ENCODE measurements at regions of chr6 and their contacts with region 1.

Region 1: DNA sequence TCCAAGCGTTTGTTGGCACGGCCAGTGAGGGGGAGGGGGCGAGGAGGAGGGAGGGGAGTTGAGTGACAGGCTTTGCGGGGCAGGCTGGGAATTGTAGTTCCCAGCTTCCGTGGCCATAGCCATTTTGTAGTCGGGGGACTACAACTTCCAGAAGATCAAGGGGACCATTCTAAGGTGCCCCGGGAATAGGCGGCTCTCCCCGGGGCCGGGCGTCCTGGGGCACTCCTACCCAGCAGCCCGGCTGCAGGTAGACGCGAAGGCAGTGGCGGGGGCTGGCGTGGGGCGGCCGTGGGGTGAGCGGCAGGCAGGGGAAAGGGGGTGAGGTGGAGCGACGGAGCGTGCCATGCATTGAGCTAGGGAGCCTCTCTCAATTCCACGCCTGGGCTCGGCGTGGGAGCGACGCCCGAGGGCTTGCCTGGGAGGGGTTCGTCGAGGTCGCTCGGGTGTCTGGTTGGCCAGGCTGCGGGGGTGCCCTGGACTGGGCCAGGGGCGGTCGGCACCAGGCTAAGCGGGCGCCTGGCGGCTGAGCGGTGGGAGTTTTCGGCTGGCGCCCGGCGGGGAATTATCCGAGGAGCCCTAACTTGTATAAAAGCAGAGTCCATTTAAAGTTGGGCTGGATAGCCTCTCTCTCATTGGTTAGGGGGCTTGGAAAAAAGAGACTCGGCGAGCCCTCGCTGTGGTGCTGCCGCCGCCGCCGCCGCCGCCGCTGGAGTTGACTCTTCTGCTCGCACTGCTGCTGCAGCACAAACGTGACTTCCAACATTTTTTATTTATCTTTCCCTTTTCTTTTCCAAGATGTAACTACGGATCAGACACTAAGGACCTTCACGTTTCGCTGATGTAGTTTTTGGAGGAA is at the start of gene JARID2:
- DNase-seq: peak; percentile 98
- H3K4me3 ChIP-seq: peak within 1 kb of the TSS; percentile 89 to 91
- H3K27ac ChIP-seq: peak within 1 kb of the TSS; percentile 95 to 98
- H3K4me1 ChIP-seq: no peaks in the 10 kb centered on the region
- H3K27me3 ChIP-seq: no peaks in the 10 kb centered on the region
- CTCF ChIP-seq: peak in 2 of 4 experiments; percentile 34 to 37
- POLR2A ChIP-seq: peak; percentile 90
- total RNA-seq, gene JARID2: 7.7 to 35.4 TPM

Region 2: GRCh38 chr6:13831615-13832014 is 1414.0 kb before region 1 on chr6:
- intact Hi-C with region 1: no loop called
- DNase-seq: no peak
- H3K4me3 ChIP-seq: no peak overlapping the region
- H3K27ac ChIP-seq: no peak overlapping the region
- H3K4me1 ChIP-seq: no peaks in the 10 kb centered on the region
- H3K27me3 ChIP-seq: no peaks in the 10 kb centered on the region
- CTCF ChIP-seq: no peak
- POLR2A ChIP-seq: no peak

Region 3: GRCh38 chr6:14210663-14211561 is 1034.7 kb before region 1 on chr6:
- intact Hi-C with region 1: loop called (anchors 5 kb)
- DNase-seq: peak; percentile 93
- H3K4me3 ChIP-seq: peak overlapping the region; percentile 53 to 65
- H3K27ac ChIP-seq: peak overlapping the region; percentile 65 to 80
- H3K4me1 ChIP-seq: no peaks in the 10 kb centered on the region
- H3K27me3 ChIP-seq: no peaks in the 10 kb centered on the region
- CTCF ChIP-seq: peak; percentile 64 to 98 (median 90)
- POLR2A ChIP-seq: peak; percentile 21

Region 4: DNA sequence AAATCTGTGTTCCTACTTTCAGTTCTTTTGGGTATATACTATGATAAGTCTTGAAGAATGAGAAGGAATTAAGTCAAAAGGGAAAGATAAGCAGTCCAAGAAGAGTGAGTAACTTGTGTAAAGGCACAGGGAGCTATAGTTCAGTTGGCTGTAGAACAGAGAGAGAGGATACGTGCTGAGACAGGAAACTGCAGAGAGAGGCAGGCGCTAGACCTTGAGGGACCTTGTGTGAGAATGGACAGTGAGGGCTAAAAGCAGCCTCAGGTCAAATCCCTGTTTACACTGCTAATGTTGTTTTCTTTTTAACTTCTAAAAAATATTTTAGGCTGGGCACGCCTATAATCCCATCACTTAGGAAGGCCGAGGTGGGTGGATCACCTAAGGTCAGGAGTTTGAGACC is 66.3 kb before region 1 on chr6:
- intact Hi-C with region 1: no loop called
- DNase-seq: no peak
- H3K4me3 ChIP-seq: no peak overlapping the region
- H3K27ac ChIP-seq: no peak overlapping the region
- H3K4me1 ChIP-seq: no peaks in the 10 kb centered on the region
- H3K27me3 ChIP-seq: no peaks in the 10 kb centered on the region
- CTCF ChIP-seq: no peak
- POLR2A ChIP-seq: no peak

Region 5: GRCh38 chr6:15274692-15275387 is 29.3 kb after region 1 on chr6:
- intact Hi-C with region 1: no loop called
- DNase-seq: no peak
- H3K4me3 ChIP-seq: no peak overlapping the region
- H3K27ac ChIP-seq: no peak overlapping the region
- H3K4me1 ChIP-seq: no peaks in the 10 kb centered on the region
- H3K27me3 ChIP-seq: no peaks in the 10 kb centered on the region
- CTCF ChIP-seq: no peak
- POLR2A ChIP-seq: no peak

Region 6: DNA sequence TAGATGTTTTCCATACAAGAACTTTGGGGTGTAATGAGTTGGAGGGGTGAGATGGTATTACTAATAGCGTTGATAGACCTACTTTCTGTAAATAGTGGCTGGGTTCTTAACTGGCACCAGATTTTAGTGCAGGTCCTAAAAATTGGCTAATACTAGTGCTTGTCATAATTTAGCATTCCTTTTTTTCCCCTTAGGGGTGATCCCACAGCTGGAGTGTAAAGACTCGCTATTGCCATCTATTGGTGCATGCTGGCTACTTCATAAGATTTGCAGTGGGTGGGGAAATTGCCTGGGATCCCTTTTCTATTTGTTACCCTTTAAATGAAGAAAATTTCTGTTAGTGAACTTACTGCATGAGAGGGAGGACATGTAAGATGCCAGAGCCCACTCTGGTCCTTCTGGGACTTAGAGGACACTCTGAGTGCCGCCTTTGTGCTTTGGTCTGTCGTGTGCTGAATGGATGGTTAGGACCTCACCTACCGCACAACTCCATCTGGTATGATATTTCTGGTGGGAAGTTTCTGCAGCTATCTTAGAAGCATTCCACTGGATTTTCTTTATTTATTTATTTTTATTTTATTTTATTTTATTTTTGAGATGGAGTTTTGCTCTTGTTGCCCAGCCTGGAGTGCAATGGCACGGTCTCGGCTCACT is 195.8 kb after region 1 on chr6:
- intact Hi-C with region 1: loop called (anchors 5 kb)
- DNase-seq: no peak
- H3K4me3 ChIP-seq: no peak overlapping the region
- H3K27ac ChIP-seq: no peak overlapping the region
- H3K4me1 ChIP-seq: peaks cover 2% of the 10 kb centered on the region
- H3K27me3 ChIP-seq: no peaks in the 10 kb centered on the region
- CTCF ChIP-seq: peak in 3 of 4 experiments; percentile 55 to 69 (median 67)
- POLR2A ChIP-seq: no peak

Region 7: DNA sequence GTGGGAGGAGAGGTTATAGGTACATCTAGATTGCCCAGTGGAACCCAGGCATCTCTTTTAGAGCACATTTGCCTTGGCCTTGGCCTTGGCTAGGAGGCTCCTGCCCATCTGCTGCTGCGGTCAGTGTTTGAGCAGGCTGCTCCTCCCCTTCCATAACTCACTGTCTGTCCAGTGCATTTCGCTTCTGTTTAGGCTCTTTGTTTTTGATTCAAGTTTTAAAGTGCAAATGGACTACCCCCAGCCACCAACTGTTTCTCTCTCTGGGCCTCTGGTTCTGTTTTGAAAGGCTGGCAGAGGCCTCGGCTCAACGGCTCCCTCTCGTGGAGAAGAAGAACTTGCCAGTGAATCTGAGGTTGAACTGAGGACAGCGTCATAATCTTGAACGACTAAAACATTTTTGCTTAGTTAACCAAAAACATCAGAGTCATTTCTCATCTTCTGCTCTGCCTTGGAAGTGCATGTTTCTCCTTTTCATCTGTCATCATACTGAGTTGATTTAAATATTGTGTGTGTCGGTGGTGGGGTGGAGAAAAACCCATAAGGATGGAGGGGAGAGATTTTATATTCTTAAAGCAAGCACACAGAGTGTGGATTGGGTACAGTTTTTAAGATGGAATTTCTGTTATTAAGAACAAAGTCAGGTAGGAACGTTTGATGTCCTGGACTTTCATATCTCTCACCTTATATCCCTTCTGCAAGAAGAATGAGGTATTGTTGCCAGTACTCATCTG is 245.8 kb after region 1 on chr6:
- intact Hi-C with region 1: loop called (anchors 5 kb)
- DNase-seq: peak; percentile 67
- H3K4me3 ChIP-seq: no peak overlapping the region
- H3K27ac ChIP-seq: no peak overlapping the region
- H3K4me1 ChIP-seq: no peaks in the 10 kb centered on the region
- H3K27me3 ChIP-seq: no peaks in the 10 kb centered on the region
- CTCF ChIP-seq: peak; percentile 80 to 85 (median 84)
- POLR2A ChIP-seq: no peak

Region 8: DNA sequence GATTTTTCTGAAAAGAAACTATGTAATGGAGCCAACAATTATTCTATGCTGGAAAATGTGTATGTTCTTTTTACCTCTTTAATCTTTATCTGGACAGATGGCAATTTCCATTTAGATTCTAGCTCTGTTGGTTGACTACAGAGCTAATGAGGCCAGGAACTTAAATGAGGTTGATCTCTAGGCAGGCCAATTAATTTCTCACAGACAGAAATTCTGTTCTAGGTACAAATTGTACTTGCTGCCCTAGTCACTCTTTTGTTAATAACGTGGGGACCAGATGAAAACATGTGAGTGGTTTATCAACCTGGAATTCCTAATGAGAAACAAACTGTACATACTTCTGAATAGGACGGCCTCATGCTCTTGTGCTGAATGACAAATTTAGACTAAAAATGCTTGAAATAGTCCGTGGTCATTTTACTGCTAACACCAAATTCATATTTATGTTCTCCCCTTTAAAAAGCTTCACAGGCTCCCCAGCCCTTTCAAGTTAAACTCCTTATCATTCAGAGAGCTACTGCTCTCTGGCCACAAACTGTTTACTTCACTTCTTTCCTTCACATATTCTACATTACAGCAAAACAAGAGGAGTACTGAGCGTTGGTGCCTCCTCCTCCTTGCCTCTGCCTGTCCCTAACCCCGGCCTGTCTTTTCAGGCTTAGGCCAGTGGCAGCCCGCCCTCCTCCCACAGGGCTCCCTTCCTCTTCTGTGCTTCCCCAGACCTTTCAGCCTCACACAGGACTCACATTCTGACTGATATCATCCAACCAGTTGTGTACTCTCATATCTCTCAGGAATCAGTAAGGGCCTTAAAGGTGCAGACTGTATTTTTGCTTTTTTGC is 375.8 kb after region 1 on chr6:
- intact Hi-C with region 1: loop called (anchors 5 kb)
- DNase-seq: no peak
- H3K4me3 ChIP-seq: no peak overlapping the region
- H3K27ac ChIP-seq: peak overlapping the region; percentile 31 to 33
- H3K4me1 ChIP-seq: no peaks in the 10 kb centered on the region
- H3K27me3 ChIP-seq: no peaks in the 10 kb centered on the region
- CTCF ChIP-seq: no peak
- POLR2A ChIP-seq: no peak

Measured in prostate gland (tissue), 2 donors.